ENCODE measurements at regions of chr10 and their contacts with region 1.

Region 1: GRCh38 chr10:60816628-60817397 is 38.5 kb downstream of the CDK1 start:
- DNase-seq: peak; percentile 85
- H3K27ac ChIP-seq: no peak overlapping the region
- CTCF ChIP-seq: peak; percentile 81

Region 2: DNA sequence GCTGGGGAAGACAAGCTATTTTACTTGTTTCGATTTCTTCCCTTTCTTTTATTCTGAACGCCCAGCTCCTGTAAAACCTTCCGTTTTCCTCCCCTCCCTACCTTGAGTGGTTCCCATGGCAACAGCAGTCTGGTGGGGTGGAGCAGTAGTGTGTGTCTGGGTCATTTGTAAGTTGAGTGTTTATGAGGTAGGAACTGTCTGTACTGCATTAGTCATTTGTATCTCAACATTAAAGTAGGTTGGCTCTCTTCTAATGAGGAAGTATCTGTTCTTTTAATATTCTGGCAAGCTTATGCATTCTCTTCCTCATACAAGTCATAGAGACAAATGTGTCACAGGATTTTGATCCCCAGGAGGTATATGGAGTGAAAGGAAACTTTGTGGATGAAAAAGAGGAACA is 825.2 kb before region 1 on chr10:
- CTCF ChIA-PET with region 1: interaction called, 11 read pairs
- POLR2A ChIA-PET with region 1: no interaction called
- DNase-seq: peak; percentile 63
- H3K27ac ChIP-seq: no peak overlapping the region
- CTCF ChIP-seq: no peak

Region 3: DNA sequence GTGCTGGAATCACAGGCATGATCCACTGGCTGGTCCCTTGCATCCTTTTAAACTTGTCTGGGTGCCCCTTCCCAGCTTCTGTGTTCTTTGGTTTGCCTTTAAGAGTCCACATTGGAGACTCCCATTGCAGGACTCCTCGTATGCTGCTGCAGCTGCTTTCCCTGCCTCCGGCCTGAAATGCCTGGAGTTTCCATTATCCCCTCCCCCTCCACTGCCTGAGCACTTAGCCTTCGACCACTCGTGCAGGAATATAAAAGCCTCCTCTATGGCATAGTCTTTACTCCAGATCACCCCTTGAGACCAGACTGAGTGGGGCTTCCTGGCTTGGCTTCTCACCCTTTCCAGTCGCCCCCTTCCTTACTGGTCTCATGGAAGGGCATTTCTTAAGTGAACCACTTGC is 47.0 kb after region 1 on chr10:
- CTCF ChIA-PET with region 1: no interaction called
- POLR2A ChIA-PET with region 1: no interaction called
- DNase-seq: no peak
- H3K27ac ChIP-seq: no peak overlapping the region
- CTCF ChIP-seq: no peak